ENCODE measurements at regions of chr7 and their contacts with region 1.

Region 1: DNA sequence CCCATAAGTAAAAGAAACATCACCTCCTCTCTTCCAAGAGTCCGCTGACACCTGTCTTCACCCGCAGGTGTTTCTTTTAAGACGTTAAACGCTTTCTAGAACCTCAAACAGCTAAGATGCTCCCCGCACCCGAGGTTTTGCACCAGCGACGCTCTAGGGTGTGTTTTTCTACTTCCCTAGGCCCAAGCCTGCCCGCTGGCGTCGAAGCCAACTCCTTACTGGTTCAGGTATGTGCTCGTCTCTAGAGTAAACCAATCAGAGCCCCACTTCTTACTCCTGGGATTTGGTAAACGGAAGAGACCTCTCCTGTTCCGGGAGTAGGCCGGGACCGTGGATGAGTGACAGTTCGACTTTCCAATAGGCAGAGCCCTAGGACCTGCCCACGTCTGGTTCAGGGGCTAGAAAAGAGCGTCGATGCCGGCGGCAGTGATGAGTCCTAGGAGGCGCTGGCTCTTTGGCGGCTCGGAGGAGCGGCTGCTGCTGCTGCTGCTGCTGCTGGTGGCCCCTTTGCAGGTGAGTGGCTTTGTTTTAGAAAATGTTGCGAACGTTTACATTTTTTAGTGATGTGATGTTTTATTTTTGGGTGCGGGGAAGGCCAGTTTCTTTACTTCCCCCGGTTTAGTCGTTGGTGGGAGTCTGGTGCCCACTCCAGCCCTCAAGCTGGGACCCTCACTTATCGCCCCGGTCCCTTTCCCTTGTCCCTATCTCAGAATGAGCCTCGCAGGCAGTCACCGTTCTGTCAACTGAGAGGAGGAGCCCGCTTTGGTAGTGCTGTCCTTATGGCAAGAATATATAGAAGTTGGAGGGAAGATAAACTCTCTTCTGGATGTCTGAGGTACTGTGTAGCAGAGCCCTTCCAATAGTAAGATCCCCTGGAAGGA is at the start of gene BPGM:
- DNase-seq: peak; percentile 99
- ATAC-seq: peak; percentile 100
- H3K4me3 ChIP-seq: peak within 1 kb of the TSS; percentile 65 to 94 (median 79)
- H3K27ac ChIP-seq: peak within 1 kb of the TSS; percentile 53
- H3K4me1 ChIP-seq: peaks cover 13% of the 10 kb centered on the region
- H3K27me3 ChIP-seq: no peaks in the 10 kb centered on the region; a peak in 1 of 5 replicates
- CTCF ChIP-seq: peak; percentile 68
- EP300 ChIP-seq: no peak
- POLR2A ChIP-seq: peak; percentile 87 to 94
- RAD21 ChIP-seq: no peak
- total RNA-seq, gene BPGM: 7.5 and 10.7 TPM in 2 replicates

Region 2: DNA sequence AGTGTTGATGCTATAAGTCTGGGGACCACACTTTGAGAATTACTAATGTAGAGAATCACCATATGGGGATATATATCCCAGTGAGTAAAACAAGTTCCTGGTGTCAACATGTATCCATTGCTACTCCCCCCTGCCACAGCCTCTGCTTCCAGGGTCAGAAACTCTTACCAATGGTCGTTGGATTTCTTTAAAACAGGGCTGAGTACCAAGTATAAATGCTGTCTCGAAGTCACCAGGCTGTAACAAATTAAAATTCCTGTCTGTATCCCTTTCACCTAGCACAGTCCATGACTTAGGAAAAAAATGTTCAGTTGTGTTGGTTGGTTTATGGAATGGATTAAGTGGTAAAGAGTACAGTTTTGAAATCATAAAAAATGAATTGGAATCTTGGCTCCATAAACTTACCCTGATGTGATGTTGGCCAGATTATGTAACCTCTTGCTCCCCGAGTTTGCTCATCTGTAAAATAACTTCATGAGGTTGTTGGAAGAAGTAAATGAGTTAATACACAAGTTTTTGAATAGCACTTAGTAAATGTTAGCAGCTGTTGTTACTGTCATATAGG is 883.5 kb before region 1 on chr7:
- CTCF ChIA-PET with region 1: no interaction called
- POLR2A ChIA-PET with region 1: no interaction called
- in situ Hi-C with region 1: no loop called
- intact Hi-C with region 1: no loop called
- DNase-seq: no peak
- ATAC-seq: no peak
- H3K4me3 ChIP-seq: no peak overlapping the region
- H3K27ac ChIP-seq: no peak overlapping the region
- H3K4me1 ChIP-seq: no peaks in the 10 kb centered on the region
- H3K27me3 ChIP-seq: no peaks in the 10 kb centered on the region
- CTCF ChIP-seq: no peak
- EP300 ChIP-seq: no peak
- POLR2A ChIP-seq: no peak
- RAD21 ChIP-seq: no peak

Region 3: GRCh38 chr7:134701272-134701671 is 54.6 kb after region 1 on chr7:
- CTCF ChIA-PET with region 1: no interaction called
- POLR2A ChIA-PET with region 1: no interaction called
- in situ Hi-C with region 1: no loop called
- intact Hi-C with region 1: loop called (anchors 5 kb)
- DNase-seq: peak; percentile 48
- ATAC-seq: peak; percentile 80
- H3K4me3 ChIP-seq: no peak overlapping the region
- H3K27ac ChIP-seq: no peak overlapping the region
- H3K4me1 ChIP-seq: peaks cover 19% of the 10 kb centered on the region
- H3K27me3 ChIP-seq: peaks cover 0 to 29% of the 10 kb centered on the region in 2 experiments; a peak in 1 of 5 replicates
- CTCF ChIP-seq: peak; percentile 46
- EP300 ChIP-seq: no peak
- POLR2A ChIP-seq: no peak
- RAD21 ChIP-seq: no peak

Region 4: GRCh38 chr7:134891262-134891695 is 244.6 kb after region 1 on chr7:
- CTCF ChIA-PET with region 1: no interaction called
- POLR2A ChIA-PET with region 1: no interaction called
- in situ Hi-C with region 1: no loop called
- intact Hi-C with region 1: loop called (anchors 5 kb)
- DNase-seq: peak; percentile 98
- ATAC-seq: peak; percentile 92
- H3K4me3 ChIP-seq: peak overlapping the region; percentile 70 to 85 (median 77); a peak in 5 of 6 replicates
- H3K27ac ChIP-seq: peak overlapping the region; percentile 84
- H3K4me1 ChIP-seq: peaks cover 63% of the 10 kb centered on the region
- H3K27me3 ChIP-seq: no peaks in the 10 kb centered on the region; a peak in 1 of 5 replicates
- CTCF ChIP-seq: no peak
- EP300 ChIP-seq: peak in 1 of 2 experiments; percentile 62; a peak in 1 of 4 replicates
- POLR2A ChIP-seq: peak; percentile 74 to 85; a peak in 3 of 4 replicates
- RAD21 ChIP-seq: peak; percentile 50; the same call in 1 of the 2 replicates

Measured in HepG2 (cell line).